Mammary epithelial cell (primary cell): ENCODE measurements at regions of chr1 and their contacts with region 1.

Region 1: GRCh38 chr1:174391716-174392115 is 56.0 kb upstream of the GPR52 start:
- DNase-seq: no peak
- H3K4me3 ChIP-seq: no peak overlapping the region
- H3K27ac ChIP-seq: no peak overlapping the region
- H3K4me1 ChIP-seq: no peaks in the 10 kb centered on the region
- H3K27me3 ChIP-seq: no peaks in the 10 kb centered on the region
- CTCF ChIP-seq: no peak

Region 2: GRCh38 chr1:174314433-174314832 is 77.3 kb before region 1 on chr1:
- CTCF ChIA-PET with region 1: no interaction called
- dilution Hi-C with region 1: loop called (anchors 5 kb)
- in situ Hi-C with region 1: no loop called
- intact Hi-C with region 1: no loop called
- DNase-seq: no peak
- H3K4me3 ChIP-seq: no peak overlapping the region
- H3K27ac ChIP-seq: no peak overlapping the region
- H3K4me1 ChIP-seq: no peaks in the 10 kb centered on the region
- H3K27me3 ChIP-seq: no peaks in the 10 kb centered on the region
- CTCF ChIP-seq: no peak

Region 3: GRCh38 chr1:175154629-175155472 is 763.1 kb after region 1 on chr1:
- CTCF ChIA-PET with region 1: no interaction called
- dilution Hi-C with region 1: no loop called
- in situ Hi-C with region 1: no loop called
- intact Hi-C with region 1: no loop called
- DNase-seq: peak; percentile 51
- H3K4me3 ChIP-seq: no peak overlapping the region
- H3K27ac ChIP-seq: no peak overlapping the region
- H3K4me1 ChIP-seq: peaks cover 19% of the 10 kb centered on the region
- H3K27me3 ChIP-seq: no peaks in the 10 kb centered on the region
- CTCF ChIP-seq: peak; percentile 88 to 93